AG04450 (cell line): ENCODE measurements at regions of chr15 and their contacts with region 1.

Region 1: DNA sequence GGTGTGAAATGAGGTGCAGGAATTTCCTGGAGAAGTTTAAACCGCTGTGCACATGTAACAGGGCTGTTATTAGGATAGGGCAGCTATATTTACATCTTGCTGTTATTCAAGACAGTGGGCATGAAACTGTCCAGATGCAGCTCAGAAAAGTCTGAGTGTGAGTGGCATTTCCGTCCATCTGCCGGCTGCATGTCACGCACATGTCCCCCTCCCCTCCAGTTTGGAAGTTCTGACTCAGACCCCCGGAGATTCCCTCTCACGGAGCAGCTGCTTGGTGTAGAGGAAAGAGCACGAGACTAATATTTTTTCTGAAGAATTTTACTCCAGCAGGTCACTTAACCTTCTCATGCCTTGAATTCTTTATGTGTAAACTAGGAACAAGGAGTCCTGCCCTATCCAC is 69.8 kb downstream of the FEM1B start:
- DNase-seq: peak; percentile 56
- H3K4me3 ChIP-seq: no peak overlapping the region
- H3K27ac ChIP-seq: peak overlapping the region; percentile 66
- H3K27me3 ChIP-seq: no peaks in the 10 kb centered on the region
- CTCF ChIP-seq: no peak

Region 2: GRCh38 chr15:68285259-68285980 is 62.0 kb before region 1 on chr15:
- CTCF ChIA-PET with region 1: no interaction called
- POLR2A ChIA-PET with region 1: no interaction called
- DNase-seq: no peak
- H3K4me3 ChIP-seq: no peak overlapping the region
- H3K27ac ChIP-seq: no peak overlapping the region
- H3K27me3 ChIP-seq: no peaks in the 10 kb centered on the region
- CTCF ChIP-seq: no peak

Region 3: GRCh38 chr15:68334661-68335124 is 12.7 kb before region 1 on chr15:
- CTCF ChIA-PET with region 1: no interaction called
- POLR2A ChIA-PET with region 1: interaction called, 12 read pairs
- DNase-seq: no peak
- H3K4me3 ChIP-seq: no peak overlapping the region
- H3K27ac ChIP-seq: peak overlapping the region; percentile 11
- H3K27me3 ChIP-seq: no peaks in the 10 kb centered on the region
- CTCF ChIP-seq: no peak

Region 4: GRCh38 chr15:68365140-68365745 is 17.9 kb after region 1 on chr15:
- CTCF ChIA-PET with region 1: no interaction called
- POLR2A ChIA-PET with region 1: no interaction called
- DNase-seq: no peak
- H3K4me3 ChIP-seq: no peak overlapping the region
- H3K27ac ChIP-seq: no peak overlapping the region
- H3K27me3 ChIP-seq: no peaks in the 10 kb centered on the region
- CTCF ChIP-seq: no peak